Panc1 (cell line): ENCODE measurements at regions of chr7 and their contacts with region 1.

Region 1: GRCh38 chr7:130322587-130322986 is 22.0 kb upstream of the CPA5 start:
- DNase-seq: no peak
- ATAC-seq: no peak
- H3K4me3 ChIP-seq: no peak overlapping the region
- H3K27ac ChIP-seq: no peak overlapping the region
- H3K4me1 ChIP-seq: no peaks in the 10 kb centered on the region
- H3K27me3 ChIP-seq: no peaks in the 10 kb centered on the region
- CTCF ChIP-seq: no peak

Region 2: GRCh38 chr7:130440527-130441365 is 118.2 kb after region 1 on chr7 and contains the start of gene CEP41:
- CTCF ChIA-PET with region 1: no interaction called
- POLR2A ChIA-PET with region 1: no interaction called
- in situ Hi-C with region 1: no loop called
- intact Hi-C with region 1: no loop called
- DNase-seq: peak; percentile 87
- ATAC-seq: peak; percentile 99
- H3K4me3 ChIP-seq: peak within 1 kb of the TSS; percentile 67 to 81
- H3K27ac ChIP-seq: peak within 1 kb of the TSS; percentile 95
- H3K4me1 ChIP-seq: peaks cover 6% of the 10 kb centered on the region
- H3K27me3 ChIP-seq: no peaks in the 10 kb centered on the region
- CTCF ChIP-seq: no peak
- total RNA-seq, gene CEP41: 13.2 TPM

Region 3: GRCh38 chr7:130553398-130554029 is 230.9 kb after region 1 on chr7:
- CTCF ChIA-PET with region 1: no interaction called
- POLR2A ChIA-PET with region 1: no interaction called
- in situ Hi-C with region 1: loop called (anchors 10 kb)
- intact Hi-C with region 1: no loop called
- DNase-seq: no peak
- ATAC-seq: no peak
- H3K4me3 ChIP-seq: no peak overlapping the region
- H3K27ac ChIP-seq: no peak overlapping the region
- H3K4me1 ChIP-seq: no peaks in the 10 kb centered on the region
- H3K27me3 ChIP-seq: no peaks in the 10 kb centered on the region
- CTCF ChIP-seq: no peak